ENCODE measurements at regions of chrX and their contacts with region 1.

Region 1: DNA sequence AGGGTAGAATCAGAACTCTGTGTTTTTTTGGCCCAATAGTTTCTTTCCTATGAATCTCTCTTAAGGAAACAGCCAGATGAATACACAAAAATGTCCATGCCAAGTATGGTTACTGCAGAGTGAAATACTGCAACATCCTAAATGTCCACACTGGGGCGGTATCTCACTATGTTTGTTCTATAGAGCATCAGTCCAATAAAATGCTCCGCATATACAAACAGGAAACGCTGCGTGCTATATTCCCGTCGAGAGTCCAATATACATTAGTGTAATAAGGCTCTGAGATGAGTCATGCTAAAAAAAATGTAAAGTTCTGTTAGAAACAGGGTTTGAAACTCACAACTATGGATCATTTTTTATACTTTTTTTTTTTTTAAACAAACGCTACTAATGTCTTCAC is 72.9 kb upstream of the ENOX2 start:
- DNase-seq: peak in 6 of 9 donors; percentile 11 to 31 (median 16)
- ATAC-seq: peak; percentile 54
- H3K4me3 ChIP-seq: no peak overlapping the region
- H3K4me3 Mint-ChIP-seq: no peak overlapping the region
- H3K27ac ChIP-seq: no peak overlapping the region
- H3K27ac Mint-ChIP-seq: no peak overlapping the region
- H3K4me1 ChIP-seq: no peaks in the 10 kb centered on the region
- H3K4me1 Mint-ChIP-seq: no peaks in the 10 kb centered on the region
- H3K27me3 ChIP-seq: no peaks in the 10 kb centered on the region
- H3K27me3 Mint-ChIP-seq: peaks cover 0 to 6% (median 0%) of the 10 kb centered on the region in 5 donors

Region 2: DNA sequence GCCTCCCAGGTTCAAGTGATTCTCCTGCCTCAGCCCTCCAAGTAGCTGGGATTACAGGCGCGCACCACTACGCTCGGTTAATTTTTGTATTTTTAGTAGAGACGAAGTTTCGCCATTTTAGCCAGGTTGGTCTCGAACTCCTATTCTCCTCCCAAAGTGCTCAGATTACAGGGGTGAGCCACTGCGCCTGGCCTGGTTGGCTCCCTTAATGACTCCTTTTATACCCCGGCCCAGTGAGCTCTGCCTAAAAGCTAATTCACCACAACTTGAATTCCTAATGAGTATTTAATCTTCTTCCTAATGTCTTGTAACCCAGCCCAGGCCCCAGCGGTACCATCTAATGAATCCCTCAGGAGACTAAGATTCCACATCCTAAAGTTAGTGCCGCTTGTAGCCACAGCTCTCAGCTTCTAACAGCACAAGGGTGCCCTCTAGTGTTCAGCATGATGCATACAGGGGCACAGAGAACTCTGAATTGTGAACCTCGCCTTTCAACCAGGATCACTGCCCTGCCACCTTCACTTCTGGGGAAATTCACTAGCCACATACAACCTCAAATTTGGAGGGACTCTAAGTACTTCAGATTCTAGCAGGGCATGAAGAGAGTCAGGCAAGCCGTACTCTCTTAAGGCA is 657.5 kb after region 1 on chrX:
- CTCF ChIA-PET with region 1: no interaction called
- POLR2A ChIA-PET with region 1: no interaction called
- intact Hi-C with region 1: loop called in 1 of 2 experiments (anchors 2 kb)
- DNase-seq: peak in 8 of 9 donors; percentile 9 to 56 (median 33)
- ATAC-seq: no peak
- H3K4me3 ChIP-seq: no peak overlapping the region
- H3K4me3 Mint-ChIP-seq: no peak overlapping the region
- H3K27ac ChIP-seq: no peak overlapping the region
- H3K27ac Mint-ChIP-seq: no peak overlapping the region
- H3K4me1 ChIP-seq: no peaks in the 10 kb centered on the region
- H3K4me1 Mint-ChIP-seq: no peaks in the 10 kb centered on the region
- H3K27me3 ChIP-seq: no peaks in the 10 kb centered on the region
- H3K27me3 Mint-ChIP-seq: peaks cover 0 to 8% (median 0%) of the 10 kb centered on the region in 5 donors

Region 3: DNA sequence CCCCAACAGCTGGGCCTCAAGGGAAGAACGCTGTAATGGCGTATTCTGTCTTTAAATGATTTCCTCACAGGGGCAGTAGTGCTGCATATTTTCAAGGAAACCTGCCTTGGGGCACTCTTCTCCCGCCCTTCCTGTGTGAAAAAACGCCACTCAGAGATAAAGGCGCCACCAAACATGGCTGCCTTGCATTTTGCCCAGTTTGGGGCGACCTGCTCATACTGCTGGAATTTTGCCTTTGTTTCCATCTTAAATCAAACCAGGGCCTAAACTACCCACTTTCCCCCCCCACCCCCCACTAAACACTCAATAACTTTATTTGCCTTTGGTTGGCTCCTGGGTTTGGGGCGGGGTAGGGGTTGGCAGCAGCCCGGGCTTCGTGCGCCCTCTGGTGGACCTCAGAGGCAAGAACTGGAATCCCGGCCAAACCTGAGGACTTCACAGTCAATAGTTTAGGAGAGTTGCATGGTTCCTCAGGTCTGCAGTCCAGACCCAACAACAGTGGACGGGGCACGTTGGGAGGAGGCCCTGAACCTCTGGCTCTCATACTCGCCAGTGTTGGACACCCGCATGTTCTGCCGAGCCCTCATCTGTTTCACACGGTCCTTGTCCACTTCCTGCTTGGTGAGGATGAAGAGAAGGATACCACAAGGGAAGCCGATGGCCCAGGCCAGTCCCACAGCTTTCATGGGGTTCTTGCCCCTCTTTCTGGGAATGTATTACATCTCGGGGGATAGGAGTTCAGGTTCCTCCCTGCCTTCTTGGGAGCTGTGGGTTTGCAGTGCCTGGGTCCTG is 827.1 kb after region 1 on chrX:
- CTCF ChIA-PET with region 1: interaction called, 3 read pairs
- POLR2A ChIA-PET with region 1: no interaction called
- intact Hi-C with region 1: loop called in 1 of 2 experiments (anchors 5 kb)
- DNase-seq: peak in 6 of 9 donors; percentile 5 to 87 (median 83)
- ATAC-seq: peak; percentile 55
- H3K4me3 ChIP-seq: no peak overlapping the region
- H3K4me3 Mint-ChIP-seq: peak overlapping the region in 5 of 10 donors; percentile 76 to 89 (median 86)
- H3K27ac ChIP-seq: peak overlapping the region; percentile 8
- H3K27ac Mint-ChIP-seq: peak overlapping the region in 4 of 9 donors; percentile 31 to 57 (median 41)
- H3K4me1 ChIP-seq: no peaks in the 10 kb centered on the region
- H3K4me1 Mint-ChIP-seq: peaks cover 0 to 8% (median 0%) of the 10 kb centered on the region in 7 donors
- H3K27me3 ChIP-seq: no peaks in the 10 kb centered on the region
- H3K27me3 Mint-ChIP-seq: no peaks in the 10 kb centered on the region

Measured in naive thymus-derived CD4-positive, alpha-beta T cell (primary cell).